ENCODE measurements at regions of chr6 and their contacts with region 1.

Region 1: GRCh38 chr6:145814501-145815308 is at the start of gene FBXO30:
- DNase-seq: peak; percentile 76 to 88
- ATAC-seq: peak; percentile 79 to 82
- H3K4me3 ChIP-seq: peak within 1 kb of the TSS; percentile 76 to 95 (median 84)
- H3K27ac ChIP-seq: peak within 1 kb of the TSS; percentile 91 to 99 (median 94)
- H3K4me1 ChIP-seq: peaks cover 45 to 54% of the 10 kb centered on the region in 2 donors
- H3K27me3 ChIP-seq: no peaks in the 10 kb centered on the region
- CTCF ChIP-seq: peak in 3 of 5 experiments; percentile 28 to 41 (median 29)
- POLR2A ChIP-seq: peak; percentile 89 to 95
- total RNA-seq, gene FBXO30: 8.6 to 38.3 (median 17.7) TPM

Region 2: GRCh38 chr6:144321839-144322591 is 1492.7 kb before region 1 on chr6:
- in situ Hi-C with region 1: no loop called
- intact Hi-C with region 1: no loop called
- DNase-seq: no peak
- ATAC-seq: no peak
- H3K4me3 ChIP-seq: no peak overlapping the region
- H3K27ac ChIP-seq: no peak overlapping the region
- H3K4me1 ChIP-seq: peaks cover 7 to 9% of the 10 kb centered on the region in 2 donors
- H3K27me3 ChIP-seq: no peaks in the 10 kb centered on the region
- CTCF ChIP-seq: no peak
- POLR2A ChIP-seq: no peak

Region 3: DNA sequence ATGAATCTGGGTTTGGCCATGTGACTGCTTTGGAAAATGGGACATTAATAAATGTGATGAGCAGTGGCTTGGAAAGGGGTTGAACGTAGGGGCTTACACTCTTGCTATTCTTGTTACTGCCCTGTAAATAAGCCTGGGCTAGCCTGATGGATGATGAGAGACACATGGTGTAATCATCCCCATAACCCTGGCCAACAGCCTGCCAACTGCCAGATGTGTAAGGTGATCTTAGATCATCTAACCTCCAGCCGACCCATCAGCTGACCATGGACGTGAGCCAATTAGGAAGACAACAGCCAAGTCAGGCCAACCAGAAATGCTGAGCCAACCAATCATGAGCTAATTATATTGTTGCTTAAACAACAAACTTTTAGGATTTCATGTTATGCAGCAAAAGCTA is 25.3 kb before region 1 on chr6:
- in situ Hi-C with region 1: no loop called
- intact Hi-C with region 1: no loop called
- DNase-seq: peak; percentile 67 to 82
- ATAC-seq: peak; percentile 86 to 92
- H3K4me3 ChIP-seq: no peak overlapping the region
- H3K27ac ChIP-seq: peak overlapping the region; percentile 65 to 76 (median 72)
- H3K4me1 ChIP-seq: peaks cover 22 to 35% of the 10 kb centered on the region in 2 donors
- H3K27me3 ChIP-seq: no peaks in the 10 kb centered on the region
- CTCF ChIP-seq: no peak
- POLR2A ChIP-seq: no peak

Region 4: DNA sequence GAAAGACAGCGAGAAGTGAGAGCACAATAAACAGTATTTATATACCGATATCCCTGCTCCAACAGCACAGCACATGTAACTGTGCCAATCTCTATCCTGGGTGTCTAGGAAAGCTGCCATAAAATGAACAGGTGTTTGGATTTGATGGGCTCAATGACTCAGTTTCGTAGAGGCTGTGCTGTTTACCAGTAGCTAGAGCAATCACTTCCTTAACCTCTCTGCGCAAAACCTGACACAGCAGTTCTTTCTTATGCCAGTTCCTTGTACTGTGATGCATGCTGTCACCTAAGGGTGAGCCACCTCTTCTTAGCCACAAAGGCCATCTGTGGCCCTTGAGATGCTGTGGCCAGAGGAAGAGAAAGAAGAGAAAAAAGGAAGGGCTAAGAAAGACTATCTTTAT is 90.2 kb after region 1 on chr6:
- in situ Hi-C with region 1: loop called in 1 of 4 experiments (anchors 10 kb)
- intact Hi-C with region 1: loop called (anchors 5 kb)
- DNase-seq: peak; percentile 69 to 74
- ATAC-seq: peak; percentile 97 to 99
- H3K4me3 ChIP-seq: no peak overlapping the region
- H3K27ac ChIP-seq: peak overlapping the region; percentile 80 to 89 (median 83)
- H3K4me1 ChIP-seq: peaks cover 47 to 54% of the 10 kb centered on the region in 2 donors
- H3K27me3 ChIP-seq: no peaks in the 10 kb centered on the region
- CTCF ChIP-seq: no peak
- POLR2A ChIP-seq: no peak

Region 5: DNA sequence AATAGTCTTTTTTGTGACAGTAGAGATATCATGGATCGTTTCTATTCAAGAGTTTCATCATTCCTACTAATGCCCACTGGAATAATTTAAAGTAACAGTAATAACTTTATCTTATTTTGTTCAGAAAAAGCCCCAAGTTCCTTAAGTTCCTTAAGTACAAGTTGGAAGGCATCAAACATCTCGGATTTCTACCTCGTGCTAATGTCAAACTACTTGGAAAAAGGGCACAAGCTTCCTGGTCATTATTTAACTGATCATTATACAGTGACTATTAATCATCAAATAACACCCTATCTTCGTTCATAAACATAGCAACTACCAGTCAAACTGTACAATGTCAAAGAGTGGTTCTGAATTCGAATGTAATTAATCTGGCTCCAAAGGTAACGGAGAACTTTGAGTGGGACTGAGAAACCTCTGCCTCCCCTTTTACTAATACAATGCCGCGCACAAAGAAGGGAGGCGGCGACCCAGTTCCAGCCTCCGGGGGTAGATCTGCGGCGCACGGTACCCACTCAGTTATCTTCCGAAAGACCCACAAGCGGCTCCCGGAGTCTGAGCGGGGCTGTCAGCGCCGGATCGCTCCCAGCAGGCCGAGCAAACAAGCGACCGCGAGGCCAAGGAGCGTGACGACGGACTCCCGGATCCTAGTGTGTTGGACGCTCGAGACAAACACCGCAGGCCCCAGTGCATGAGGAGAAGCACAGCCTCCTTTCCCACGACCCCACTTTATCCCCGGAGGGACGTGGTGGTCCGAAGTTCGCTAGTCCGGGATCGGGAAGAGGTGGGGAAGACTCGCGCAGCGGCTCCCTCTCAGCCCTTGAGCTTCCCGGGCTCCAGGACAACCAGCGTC is 148.7 kb after region 1 on chr6:
- in situ Hi-C with region 1: loop called in 1 of 4 experiments (anchors 10 kb)
- intact Hi-C with region 1: loop called (anchors 5 kb)
- DNase-seq: peak in 1 of 2 donors; percentile 33
- ATAC-seq: peak; percentile 54 to 56
- H3K4me3 ChIP-seq: peak overlapping the region; percentile 77 to 90 (median 84)
- H3K27ac ChIP-seq: peak overlapping the region; percentile 86 to 96 (median 89)
- H3K4me1 ChIP-seq: peaks cover 30 to 33% of the 10 kb centered on the region in 2 donors
- H3K27me3 ChIP-seq: no peaks in the 10 kb centered on the region
- CTCF ChIP-seq: no peak
- POLR2A ChIP-seq: no peak

Region 6: GRCh38 chr6:146543211-146543939 is 728.7 kb after region 1 on chr6 and contains the start of gene RAB32:
- in situ Hi-C with region 1: no loop called
- intact Hi-C with region 1: loop called (anchors 5 kb)
- DNase-seq: peak; percentile 72 to 80
- ATAC-seq: peak; percentile 70 to 76
- H3K4me3 ChIP-seq: peak within 1 kb of the TSS; percentile 61 to 70 (median 67)
- H3K27ac ChIP-seq: peak within 1 kb of the TSS; percentile 81 to 89 (median 84)
- H3K4me1 ChIP-seq: peaks cover 3 to 5% of the 10 kb centered on the region in 2 donors
- H3K27me3 ChIP-seq: no peaks in the 10 kb centered on the region
- CTCF ChIP-seq: peak; percentile 30 to 70 (median 53)
- POLR2A ChIP-seq: peak; percentile 67 to 85
- total RNA-seq, gene RAB32: 1.2 to 4.3 (median 3.2) TPM

Region 7: GRCh38 chr6:147202516-147203312 is 1388.0 kb after region 1 on chr6:
- in situ Hi-C with region 1: loop called in 1 of 4 experiments (anchors 25 kb)
- intact Hi-C with region 1: no loop called
- DNase-seq: peak; percentile 81 to 87
- ATAC-seq: peak; percentile 90 to 95
- H3K4me3 ChIP-seq: peak overlapping the region; percentile 64 to 95 (median 82)
- H3K27ac ChIP-seq: peak overlapping the region; percentile 88 to 96 (median 93)
- H3K4me1 ChIP-seq: peaks cover 16% of the 10 kb centered on the region in 2 donors
- H3K27me3 ChIP-seq: no peaks in the 10 kb centered on the region
- CTCF ChIP-seq: no peak
- POLR2A ChIP-seq: peak; percentile 71 to 88